Right ventricle myocardium superior (tissue), 1 donor: ENCODE measurements at regions of chr10 and their contacts with region 1.

Region 1: GRCh38 chr10:7756360-7756992 is 31.3 kb downstream of the KIN start:
- DNase-seq: no peak
- ATAC-seq: peak; percentile 60

Region 2: DNA sequence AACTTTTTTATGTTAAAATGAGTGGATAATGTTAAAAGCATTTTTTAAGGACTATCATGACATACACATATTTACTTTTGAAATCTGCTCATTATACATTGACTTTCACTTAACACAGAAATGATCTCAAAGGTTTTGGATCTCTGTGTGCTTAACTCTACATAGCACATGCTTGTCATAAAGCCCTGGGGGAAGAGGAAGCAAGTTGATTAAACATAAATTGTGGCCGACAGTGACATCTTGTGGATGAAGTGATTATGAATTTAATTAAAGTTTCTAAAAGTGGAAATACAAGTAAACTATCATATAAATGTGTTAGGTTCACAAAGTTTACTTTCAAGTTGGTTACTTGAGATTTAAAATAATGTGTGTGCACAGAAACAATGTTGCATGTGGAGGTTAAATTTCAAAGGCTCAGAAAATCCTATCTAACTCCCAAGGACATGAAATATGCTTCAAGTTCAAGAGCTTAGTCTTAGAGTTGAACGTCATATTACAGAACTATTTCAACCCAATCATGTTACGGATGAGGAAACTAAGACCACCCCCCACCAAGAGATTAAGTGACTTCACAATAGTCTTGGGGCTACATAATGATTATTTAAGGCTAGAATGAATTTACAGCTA is 1545.8 kb after region 1 on chr10:
- intact Hi-C with region 1: loop called (anchors 10 kb)
- DNase-seq: no peak
- ATAC-seq: no peak